ENCODE measurements at regions of chr12 and their contacts with region 1.

Region 1: GRCh38 chr12:31250179-31250578 is 75.8 kb downstream of the SINHCAF start:
- DNase-seq: no peak
- H3K4me3 ChIP-seq: no peak overlapping the region
- H3K27ac ChIP-seq: no peak overlapping the region
- H3K4me1 ChIP-seq: no peaks in the 10 kb centered on the region
- H3K27me3 ChIP-seq: no peaks in the 10 kb centered on the region
- CTCF ChIP-seq: no peak

Region 2: DNA sequence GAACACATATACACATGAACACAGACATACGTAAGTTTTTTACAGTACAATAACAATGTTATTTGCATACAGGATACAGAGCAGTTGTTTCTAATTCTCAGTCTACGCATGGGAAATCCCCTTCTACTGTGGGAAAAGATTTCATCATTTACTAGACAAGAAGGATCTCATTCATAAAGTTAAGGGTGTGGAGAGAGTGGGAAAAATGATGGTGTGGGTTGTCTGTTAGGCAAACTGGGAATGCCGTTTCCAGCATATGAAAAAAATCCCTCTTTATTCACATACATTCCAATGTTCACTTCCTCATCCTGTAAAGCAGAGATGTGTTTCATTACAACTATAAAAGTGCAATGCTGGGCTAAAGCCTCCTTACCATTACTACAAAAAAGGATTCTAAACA is 45.1 kb before region 1 on chr12:
- intact Hi-C with region 1: no loop called
- DNase-seq: no peak
- H3K4me3 ChIP-seq: no peak overlapping the region
- H3K27ac ChIP-seq: no peak overlapping the region
- H3K4me1 ChIP-seq: no peaks in the 10 kb centered on the region
- H3K27me3 ChIP-seq: no peaks in the 10 kb centered on the region
- CTCF ChIP-seq: no peak

Region 3: GRCh38 chr12:31362759-31363415 is 112.7 kb after region 1 on chr12:
- intact Hi-C with region 1: loop called (anchors 5 kb)
- DNase-seq: peak; percentile 69
- H3K4me3 ChIP-seq: no peak overlapping the region
- H3K27ac ChIP-seq: peak overlapping the region; percentile 74
- H3K4me1 ChIP-seq: peaks cover 5% of the 10 kb centered on the region
- H3K27me3 ChIP-seq: no peaks in the 10 kb centered on the region
- CTCF ChIP-seq: no peak